ENCODE measurements at regions of chr11 and their contacts with region 1.

Region 1: DNA sequence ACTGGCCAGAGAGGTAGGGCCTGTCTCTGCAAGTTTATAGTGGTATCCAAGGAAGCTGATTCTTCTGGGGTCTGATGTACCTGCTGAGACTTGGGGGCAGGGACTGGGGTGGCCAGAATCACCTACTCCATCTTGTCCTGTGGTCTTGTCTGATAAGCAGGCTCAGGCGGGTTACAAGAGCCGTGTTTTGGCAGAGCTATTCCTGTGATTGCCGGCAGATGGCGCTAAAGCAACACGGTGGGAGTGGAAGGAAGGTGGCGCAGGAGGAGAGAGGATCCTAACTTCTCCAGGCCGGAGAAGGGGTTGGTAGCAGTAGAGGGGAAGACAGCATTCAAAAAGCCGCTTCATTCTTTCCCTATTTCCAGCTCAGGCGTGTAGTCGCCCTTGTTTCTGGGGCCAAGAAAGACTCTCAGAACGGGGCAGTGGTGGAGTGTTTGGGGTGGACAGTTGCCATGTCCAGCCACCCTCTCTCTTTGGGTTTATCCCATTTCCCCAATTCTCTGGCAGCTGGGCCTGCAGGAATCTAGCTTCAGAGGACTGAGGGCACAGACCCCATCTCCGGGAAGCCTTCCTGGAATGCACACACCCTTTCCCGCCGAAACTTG is 15.1 kb downstream of the CHRM1 start:
- DNase-seq: peak; percentile 61 to 71
- ATAC-seq: peak; percentile 60

Region 2: DNA sequence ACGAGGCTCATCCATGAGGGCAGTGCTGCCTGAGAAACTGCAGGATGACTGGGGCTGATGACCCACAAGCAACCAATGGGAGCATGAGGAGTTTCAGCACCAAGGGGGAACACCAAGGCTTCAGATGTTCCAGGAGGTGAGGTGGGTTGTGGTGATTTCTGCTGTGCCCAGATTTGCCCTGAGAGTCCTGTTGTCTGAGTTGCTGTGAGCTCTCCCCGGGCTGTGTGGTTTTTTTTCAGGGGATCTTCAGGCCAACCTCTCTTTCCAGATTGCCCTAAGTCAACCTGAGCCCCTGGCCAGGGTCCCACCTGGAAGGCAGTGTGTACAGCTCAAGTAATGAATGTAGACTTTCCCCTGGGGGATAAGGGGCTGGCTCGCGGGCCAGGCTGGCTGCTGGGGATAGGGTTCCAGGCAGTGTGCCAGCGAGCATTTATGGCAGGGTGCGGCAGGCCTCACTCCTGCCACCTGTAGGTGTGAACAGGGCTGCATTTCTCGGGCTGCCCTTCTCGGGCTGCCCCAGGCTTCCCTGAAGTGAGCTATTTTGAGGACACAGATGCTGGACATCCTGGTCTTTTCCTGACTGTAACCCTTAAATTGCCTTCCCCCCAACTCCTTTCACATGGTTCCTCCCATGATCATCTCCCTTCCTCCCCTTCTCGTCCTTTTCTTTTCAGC is 69.0 kb after region 1 on chr11:
- intact Hi-C with region 1: no loop called
- DNase-seq: peak; percentile 69 to 90
- ATAC-seq: peak; percentile 100

Region 3: GRCh38 chr11:63023841-63024648 is 118.0 kb after region 1 on chr11:
- intact Hi-C with region 1: loop called (anchors 2 to 5 kb)
- DNase-seq: peak; percentile 63 to 92
- ATAC-seq: peak; percentile 94

Region 4: GRCh38 chr11:63280920-63281319 is 374.9 kb after region 1 on chr11:
- intact Hi-C with region 1: no loop called
- DNase-seq: no peak
- ATAC-seq: no peak

Region 5: DNA sequence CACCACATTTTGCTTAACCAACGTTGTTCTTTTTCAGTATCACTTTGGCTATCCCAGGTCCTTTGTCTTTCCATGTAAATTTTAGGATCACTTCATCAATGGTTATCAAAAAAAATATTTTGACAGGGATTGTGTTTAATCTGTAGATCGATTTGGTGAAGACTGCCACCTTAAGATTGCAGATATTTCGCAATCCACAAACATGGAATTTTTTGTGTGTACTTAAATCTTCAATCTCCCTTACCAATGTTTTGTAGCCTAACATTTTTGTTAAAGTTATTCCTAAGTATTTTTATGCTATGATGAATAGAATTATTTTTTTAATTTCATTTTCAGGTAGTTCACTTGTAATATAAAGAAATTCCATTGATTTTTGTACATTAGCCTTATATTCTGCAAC is 566.4 kb after region 1 on chr11:
- intact Hi-C with region 1: no loop called
- DNase-seq: no peak
- ATAC-seq: no peak

Measured in left colon (tissue), 2 donors.